Dorsolateral prefrontal cortex (tissue), 120 donors: ENCODE measurements at regions of chr2 and their contacts with region 1.

Region 1: GRCh38 chr2:138548796-138549195 is 47.2 kb downstream of the SPOPL start:
- DNase-seq: no peak
- H3K4me3 ChIP-seq: peak overlapping the region in 1 of 59 donors; percentile 36
- H3K27ac ChIP-seq: peak overlapping the region in 2 of 59 donors; percentile 6 to 16
- H3K27me3 ChIP-seq: no peaks in the 10 kb centered on the region
- CTCF ChIP-seq: no peak

Region 2: DNA sequence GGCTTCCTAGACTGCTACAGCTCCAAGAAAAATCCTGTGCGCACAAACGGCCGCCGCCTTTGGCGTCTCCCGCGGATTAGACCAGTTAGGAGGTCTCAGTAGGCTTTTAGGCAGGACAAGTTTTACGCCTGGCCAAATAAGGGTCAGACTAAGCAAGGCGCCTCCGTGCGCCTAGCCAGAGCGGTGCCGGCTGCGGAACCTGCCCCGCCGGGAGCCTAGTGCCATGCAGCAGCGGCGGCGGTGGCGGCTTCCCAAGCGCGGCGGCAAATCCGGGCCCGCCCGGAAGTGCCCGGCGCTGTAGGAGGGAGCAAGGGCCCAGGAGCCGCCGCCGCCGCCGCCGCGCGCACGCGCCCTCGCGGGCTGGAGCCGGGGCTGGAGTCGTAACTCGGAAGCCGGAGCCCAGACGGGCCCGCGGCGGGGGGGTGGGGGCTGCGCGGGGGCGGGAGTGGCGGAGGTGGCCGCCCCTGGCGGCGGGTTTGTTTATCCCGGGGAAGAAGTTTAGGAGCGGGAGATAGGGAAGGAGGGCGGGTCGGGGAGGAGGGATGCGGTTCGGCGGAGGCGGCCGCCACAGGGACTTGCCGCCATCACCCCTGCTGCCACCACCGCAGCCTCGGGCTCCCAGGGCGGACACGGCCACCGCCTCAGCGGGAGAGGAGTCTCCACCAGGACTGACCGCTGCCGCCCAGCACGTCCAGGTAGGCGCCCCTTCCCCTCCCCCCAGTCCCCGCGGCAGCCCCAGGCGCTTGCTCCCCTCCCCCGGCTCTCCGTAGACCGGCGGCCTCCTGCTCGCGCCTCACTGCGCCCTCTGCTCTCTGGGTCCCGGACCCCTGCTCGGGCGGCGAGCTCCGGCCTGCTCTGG is 47.1 kb before region 1 on chr2 and contains the start of gene SPOPL:
- intact Hi-C with region 1: loop called in 1 of 2 experiments (anchors 5 kb)
- DNase-seq: peak; percentile 77 to 94 (median 86)
- H3K4me3 ChIP-seq: peak within 1 kb of the TSS; percentile 67 to 99 (median 92)
- H3K27ac ChIP-seq: peak within 1 kb of the TSS; percentile 58 to 95 (median 89)
- H3K27me3 ChIP-seq: no peaks in the 10 kb centered on the region
- CTCF ChIP-seq: peak in 48 of 56 donors; percentile 16 to 79 (median 44)
- total RNA-seq, gene SPOPL: 18.1 to 38.9 (median 26.8) TPM

Region 3: DNA sequence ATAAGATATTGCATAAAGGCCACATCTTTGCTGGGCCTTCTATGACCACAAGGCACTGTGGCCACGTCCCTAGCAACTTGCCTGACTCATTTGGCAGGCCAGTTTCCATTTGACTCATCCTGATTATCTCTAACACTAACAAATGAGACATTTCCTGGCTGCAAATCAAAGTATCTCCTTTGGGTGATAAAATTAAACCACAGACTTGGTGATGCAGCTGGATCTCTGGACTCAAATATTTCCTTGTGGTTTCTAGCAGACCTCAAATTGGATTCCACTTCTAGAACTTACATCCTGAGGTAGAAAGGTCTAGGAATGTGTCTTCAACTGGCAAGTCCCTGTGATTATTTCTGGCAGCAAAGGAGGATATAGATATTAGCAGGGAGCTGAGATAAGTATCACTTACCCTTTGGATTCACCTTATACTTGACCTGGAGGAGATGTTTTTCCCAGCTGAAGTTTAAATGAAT is 399.3 kb after region 1 on chr2:
- intact Hi-C with region 1: no loop called
- DNase-seq: peak in 2 of 10 donors; percentile 10 to 42
- H3K4me3 ChIP-seq: no peak overlapping the region
- H3K27ac ChIP-seq: peak overlapping the region in 31 of 59 donors; percentile 2 to 65 (median 43)
- H3K27me3 ChIP-seq: no peaks in the 10 kb centered on the region
- CTCF ChIP-seq: no peak